Cardiac septum (tissue), 1 donor: ENCODE measurements at regions of chr21 and their contacts with region 1.

Region 1: DNA sequence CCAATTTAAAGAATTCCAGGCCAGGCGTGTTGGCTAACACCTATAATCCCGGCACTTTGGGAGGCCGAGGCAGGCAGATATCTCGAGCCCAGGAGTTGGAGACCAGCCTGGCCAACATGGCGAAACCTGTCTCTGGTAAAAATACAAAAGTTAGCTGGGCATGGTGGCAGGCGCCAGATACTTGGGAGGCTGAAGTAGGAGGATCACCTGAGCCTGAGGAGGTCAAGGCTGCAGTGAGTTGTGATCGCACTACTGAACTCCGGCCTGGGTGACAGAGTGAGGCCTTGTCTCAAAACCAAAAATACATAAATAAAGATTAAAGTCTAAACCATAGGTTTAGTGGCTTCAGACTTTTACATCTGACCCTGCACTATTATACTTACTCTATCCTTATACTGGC is 32.4 kb downstream of the BTG3 start:
- DNase-seq: no peak

Region 2: DNA sequence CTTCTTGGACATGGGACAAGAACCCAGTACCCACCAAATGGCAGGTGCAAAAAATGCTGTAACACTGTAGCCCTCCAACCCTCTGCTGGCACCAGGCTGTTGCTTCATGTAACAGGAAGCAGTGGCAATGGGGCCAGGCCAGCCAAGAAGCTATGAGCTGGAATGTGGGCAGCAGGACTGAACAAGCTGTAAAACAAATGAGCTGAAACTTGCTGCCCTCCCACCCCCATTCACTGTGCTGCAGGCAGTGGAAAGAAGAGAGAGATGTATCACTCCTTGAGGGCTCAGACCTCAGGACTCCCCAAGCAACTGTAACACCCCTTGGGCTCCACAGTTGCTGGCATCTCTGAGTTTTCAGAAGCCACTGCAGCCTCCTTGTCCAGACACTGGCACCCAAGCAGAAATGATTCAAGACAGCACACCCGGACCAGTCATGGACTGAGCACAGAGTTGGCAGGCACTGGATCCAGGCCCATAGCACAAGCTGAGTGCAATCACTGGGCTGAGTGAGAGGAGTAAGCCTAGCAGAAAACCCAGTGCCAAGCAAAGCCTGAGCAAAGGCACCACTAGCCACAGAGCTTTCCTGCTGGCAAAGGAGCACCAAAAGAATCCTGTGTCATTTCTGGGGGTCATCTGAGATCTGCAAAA is 388.8 kb before region 1 on chr21:
- intact Hi-C with region 1: no loop called
- DNase-seq: no peak

Region 3: DNA sequence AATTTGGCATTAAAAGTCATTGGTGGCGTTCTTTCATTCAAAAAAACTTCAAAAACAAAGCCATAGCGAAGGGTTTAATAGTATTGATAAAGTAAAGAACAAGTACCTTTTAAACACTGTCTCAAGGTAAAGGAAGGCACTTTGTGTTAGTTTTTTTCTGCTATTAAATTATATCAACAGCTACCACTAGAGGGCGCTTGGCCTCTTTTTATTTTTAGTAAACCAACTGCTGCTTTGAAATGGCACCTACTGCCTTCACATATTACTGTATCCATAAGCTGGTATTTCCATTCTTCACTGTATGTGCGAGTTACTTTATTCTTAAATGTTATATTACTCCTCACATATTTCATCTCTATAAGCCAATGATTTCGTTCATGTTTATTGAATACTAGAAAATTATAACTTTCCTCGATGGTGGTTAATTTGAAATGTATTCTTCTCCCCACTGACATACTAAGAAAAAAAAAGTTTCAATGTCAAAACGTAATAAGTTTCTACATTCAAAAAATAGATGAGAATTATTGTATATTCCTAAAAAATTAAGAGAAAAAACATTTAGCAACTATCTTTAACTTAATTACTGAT is 193.2 kb before region 1 on chr21:
- intact Hi-C with region 1: loop called (anchors 5 kb)
- DNase-seq: no peak

Region 4: GRCh38 chr21:18249672-18250071 is 669.4 kb after region 1 on chr21:
- intact Hi-C with region 1: no loop called
- DNase-seq: no peak